K562 (cell line): ENCODE measurements at regions of chrX and their contacts with region 1.

Region 1: DNA sequence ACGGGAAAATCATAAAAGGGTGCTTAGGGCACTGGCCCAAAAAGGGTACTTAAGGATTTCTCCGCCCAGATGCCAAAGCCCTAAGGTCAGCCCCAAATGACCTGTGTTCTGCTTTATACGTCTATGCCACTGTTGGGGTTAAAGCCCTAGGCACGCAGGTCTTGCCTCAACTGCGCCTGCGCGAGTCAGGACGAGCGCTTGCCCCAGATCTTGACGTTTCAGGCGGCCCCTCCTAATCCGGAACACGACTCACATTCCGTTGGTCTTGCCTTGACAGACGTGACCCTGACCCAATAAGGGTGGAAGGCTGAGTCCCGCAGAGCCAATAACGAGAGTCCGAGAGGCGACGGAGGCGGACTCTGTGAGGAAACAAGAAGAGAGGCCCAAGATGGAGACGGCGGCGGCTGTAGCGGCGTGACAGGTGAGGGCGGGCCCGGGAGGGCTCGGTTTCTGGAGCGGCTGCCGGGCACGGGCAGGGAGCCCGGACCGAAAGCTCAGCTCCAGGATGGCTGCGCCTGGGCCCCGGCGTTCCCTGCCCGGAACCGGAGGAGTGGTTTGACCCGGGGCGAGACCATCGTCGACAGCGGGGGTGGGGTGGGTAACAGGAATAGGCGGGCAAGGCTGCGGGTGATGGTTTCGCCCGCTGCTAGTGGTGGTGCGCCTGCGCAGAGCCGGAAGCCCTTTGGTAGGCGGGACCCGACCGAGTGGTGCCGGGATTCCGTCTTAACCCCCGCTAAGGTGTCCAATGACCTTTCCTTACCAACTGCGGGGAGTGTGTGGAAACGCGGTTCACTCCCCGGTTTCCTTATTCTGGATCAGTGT is at the start of gene ARAF:
- DNase-seq: peak; percentile 98 to 99 (median 98)
- ATAC-seq: peak; percentile 94
- H3K4me3 ChIP-seq: peak within 1 kb of the TSS; percentile 56
- H3K27ac ChIP-seq: peak within 1 kb of the TSS; percentile 88
- H3K4me1 ChIP-seq: peaks cover 14 to 25% of the 10 kb centered on the region in 2 experiments
- H3K27me3 ChIP-seq: no peaks in the 10 kb centered on the region
- CTCF ChIP-seq: no peak
- EP300 ChIP-seq: no peak; the same call in 1 of the 2 replicates
- POLR2A ChIP-seq: peak; percentile 90
- RAD21 ChIP-seq: no peak
- polyA plus RNA-seq, gene ARAF: 5.5 to 8.8 TPM

Region 2: GRCh38 chrX:47540754-47541538 is 20.1 kb before region 1 on chrX:
- CTCF ChIA-PET with region 1: interaction called, 3 read pairs
- POLR2A ChIA-PET with region 1: interaction called, 3 read pairs
- in situ Hi-C with region 1: no loop called
- intact Hi-C with region 1: loop called (anchors 1 kb)
- DNase-seq: peak; percentile 63 to 92 (median 78)
- ATAC-seq: peak; percentile 100
- H3K4me3 ChIP-seq: no peak overlapping the region
- H3K27ac ChIP-seq: peak overlapping the region; percentile 72
- H3K4me1 ChIP-seq: peaks cover 0 to 8% of the 10 kb centered on the region in 2 experiments; a peak in 3 of 5 replicates
- H3K27me3 ChIP-seq: no peaks in the 10 kb centered on the region
- CTCF ChIP-seq: peak; percentile 66 to 74 (median 74)
- EP300 ChIP-seq: peak; percentile 70
- POLR2A ChIP-seq: peak; percentile 56; the same call in 1 of the 2 replicates
- RAD21 ChIP-seq: peak; percentile 66 to 67

Region 3: DNA sequence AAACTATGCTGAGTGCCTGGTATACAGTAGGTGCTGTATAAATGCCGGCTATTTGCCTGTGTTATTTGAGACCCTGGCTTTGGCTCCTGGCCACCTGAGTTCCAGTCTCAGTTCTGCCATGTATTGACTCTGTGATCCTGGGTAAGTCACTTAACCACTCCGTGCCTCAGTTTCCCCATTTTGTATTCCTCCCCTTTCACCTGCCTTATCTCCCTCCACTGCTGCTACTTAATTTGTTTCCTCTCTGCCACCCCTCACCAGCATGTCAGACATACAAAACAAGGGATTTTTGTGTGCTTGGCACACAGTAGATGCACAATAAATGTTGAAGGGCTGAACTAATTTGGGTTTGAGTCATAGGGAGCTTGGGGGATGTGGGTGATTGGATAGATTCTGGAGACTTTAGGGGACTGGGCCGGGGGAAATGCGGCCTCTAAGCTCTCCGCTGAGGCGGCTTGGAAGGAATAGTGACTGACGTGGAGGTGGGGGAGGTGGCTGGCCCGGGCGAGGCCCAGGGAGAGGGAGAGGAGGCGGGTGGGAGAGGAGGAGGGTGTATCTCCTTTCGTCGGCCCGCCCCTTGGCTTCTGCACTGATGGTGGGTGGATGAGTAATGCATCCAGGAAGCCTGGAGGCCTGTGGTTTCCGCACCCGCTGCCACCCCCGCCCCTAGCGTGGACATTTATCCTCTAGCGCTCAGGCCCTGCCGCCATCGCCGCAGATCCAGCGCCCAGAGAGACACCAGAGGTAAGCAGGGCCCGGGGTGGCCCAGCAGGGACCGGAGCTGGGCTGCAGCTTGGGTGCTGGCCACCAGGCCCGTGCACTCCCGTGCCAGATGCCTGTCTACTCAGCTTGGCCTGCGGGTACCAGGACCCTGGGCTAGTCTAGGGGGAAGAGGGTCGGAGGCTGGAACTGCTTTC is 20.9 kb after region 1 on chrX and contains the start of gene TIMP1:
- CTCF ChIA-PET with region 1: no interaction called
- POLR2A ChIA-PET with region 1: no interaction called
- in situ Hi-C with region 1: no loop called
- intact Hi-C with region 1: loop called (anchors 2 kb)
- DNase-seq: peak; percentile 92 to 95 (median 92)
- ATAC-seq: peak; percentile 98
- H3K4me3 ChIP-seq: peak within 1 kb of the TSS; percentile 75
- H3K27ac ChIP-seq: peak within 1 kb of the TSS; percentile 91
- H3K4me1 ChIP-seq: peaks cover 23 to 32% of the 10 kb centered on the region in 2 experiments; a peak in 4 of 5 replicates
- H3K27me3 ChIP-seq: no peaks in the 10 kb centered on the region
- CTCF ChIP-seq: no peak
- EP300 ChIP-seq: no peak; the same call in 1 of the 2 replicates
- POLR2A ChIP-seq: peak; percentile 86
- RAD21 ChIP-seq: no peak
- polyA plus RNA-seq, gene TIMP1: 530 to 699 TPM

Region 4: GRCh38 chrX:47644557-47645091 is 83.6 kb after region 1 on chrX:
- CTCF ChIA-PET with region 1: no interaction called
- POLR2A ChIA-PET with region 1: no interaction called
- in situ Hi-C with region 1: no loop called
- intact Hi-C with region 1: loop called (anchors 5 kb)
- DNase-seq: peak in 2 of 4 experiments; percentile 33 to 39
- ATAC-seq: peak; percentile 75
- H3K4me3 ChIP-seq: no peak overlapping the region
- H3K27ac ChIP-seq: no peak overlapping the region
- H3K4me1 ChIP-seq: peaks cover 9 to 21% of the 10 kb centered on the region in 2 experiments; a peak in 4 of 5 replicates
- H3K27me3 ChIP-seq: no peaks in the 10 kb centered on the region
- CTCF ChIP-seq: peak; percentile 38 to 44 (median 43)
- EP300 ChIP-seq: no peak
- POLR2A ChIP-seq: no peak
- RAD21 ChIP-seq: peak in 1 of 2 experiments; percentile 12; a peak in 1 of 4 replicates

Region 5: GRCh38 chrX:47723689-47724088 is 162.6 kb after region 1 on chrX:
- CTCF ChIA-PET with region 1: no interaction called
- POLR2A ChIA-PET with region 1: no interaction called
- in situ Hi-C with region 1: loop called (anchors 5 kb)
- intact Hi-C with region 1: loop called (anchors 1 kb)
- DNase-seq: peak in 3 of 4 experiments; percentile 15 to 65 (median 25)
- ATAC-seq: peak; percentile 95
- H3K4me3 ChIP-seq: no peak overlapping the region
- H3K27ac ChIP-seq: no peak overlapping the region
- H3K4me1 ChIP-seq: peaks cover 0 to 4% of the 10 kb centered on the region in 2 experiments; a peak in 3 of 5 replicates
- H3K27me3 ChIP-seq: peaks cover 0 to 9% of the 10 kb centered on the region in 2 experiments; a peak in 1 of 5 replicates
- CTCF ChIP-seq: peak; percentile 72 to 91 (median 86)
- EP300 ChIP-seq: no peak
- POLR2A ChIP-seq: no peak
- RAD21 ChIP-seq: peak; percentile 81 to 84

Region 6: DNA sequence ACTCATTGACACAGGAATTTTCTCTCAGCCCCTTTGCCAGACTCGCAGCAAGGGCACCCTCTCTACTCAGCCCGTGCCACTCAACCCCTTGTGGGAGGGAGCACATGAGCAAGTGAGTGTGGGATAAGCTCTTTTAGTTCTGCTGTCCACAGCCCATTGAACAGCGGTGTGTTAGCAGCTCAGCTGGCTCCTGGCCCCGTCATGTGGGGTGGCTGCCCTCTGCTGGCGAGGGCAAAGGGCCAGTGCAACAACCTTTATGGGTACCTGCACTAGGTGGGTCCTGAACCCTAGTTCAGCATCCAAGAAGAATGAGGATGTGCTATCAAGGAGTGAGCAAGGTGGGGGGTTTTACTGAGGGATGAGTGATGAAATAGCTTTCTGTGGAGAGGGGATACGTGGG is 190.6 kb after region 1 on chrX:
- CTCF ChIA-PET with region 1: no interaction called
- POLR2A ChIA-PET with region 1: no interaction called
- in situ Hi-C with region 1: no loop called
- intact Hi-C with region 1: loop called (anchors 2 kb)
- DNase-seq: peak; percentile 27 to 65 (median 36)
- ATAC-seq: peak; percentile 95
- H3K4me3 ChIP-seq: no peak overlapping the region
- H3K27ac ChIP-seq: no peak overlapping the region
- H3K4me1 ChIP-seq: peaks cover 0 to 10% of the 10 kb centered on the region in 2 experiments; a peak in 2 of 5 replicates
- H3K27me3 ChIP-seq: no peaks in the 10 kb centered on the region
- CTCF ChIP-seq: peak; percentile 66 to 72 (median 72)
- EP300 ChIP-seq: no peak
- POLR2A ChIP-seq: no peak
- RAD21 ChIP-seq: peak; percentile 43 to 78

Region 7: GRCh38 chrX:47836164-47837072 is 275.4 kb after region 1 on chrX and contains the start of gene ZNF81:
- CTCF ChIA-PET with region 1: no interaction called
- POLR2A ChIA-PET with region 1: no interaction called
- in situ Hi-C with region 1: no loop called
- intact Hi-C with region 1: loop called (anchors 5 kb)
- DNase-seq: peak; percentile 85 to 98 (median 90)
- ATAC-seq: peak; percentile 99
- H3K4me3 ChIP-seq: peak within 1 kb of the TSS; percentile 60
- H3K27ac ChIP-seq: peak within 1 kb of the TSS; percentile 62
- H3K4me1 ChIP-seq: no peaks in the 10 kb centered on the region; a peak in 1 of 5 replicates
- H3K27me3 ChIP-seq: no peaks in the 10 kb centered on the region
- CTCF ChIP-seq: no peak
- EP300 ChIP-seq: no peak
- POLR2A ChIP-seq: peak; percentile 70
- RAD21 ChIP-seq: no peak
- polyA plus RNA-seq, gene ZNF81: 9.1 to 9.6 TPM